Ascending aorta (tissue), 2 donors: ENCODE measurements at regions of chr9 and their contacts with region 1.

Region 1: GRCh38 chr9:127897218-127898211 is 1.9 kb downstream of the ST6GALNAC6 start:
- DNase-seq: peak in 1 of 2 donors; percentile 92
- H3K4me3 ChIP-seq: peak overlapping the region; percentile 83 to 100
- H3K27ac ChIP-seq: peak overlapping the region; percentile 95 to 99
- H3K4me1 ChIP-seq: peaks cover 14 to 29% of the 10 kb centered on the region in 2 donors
- H3K27me3 ChIP-seq: no peaks in the 10 kb centered on the region
- CTCF ChIP-seq: no peak

Region 2: GRCh38 chr9:127877566-127877998 is 19.9 kb before region 1 on chr9 and contains the start of gene AK1:
- intact Hi-C with region 1: loop called (anchors 2 kb)
- DNase-seq: peak in 1 of 2 donors; percentile 89
- H3K4me3 ChIP-seq: peak within 1 kb of the TSS; percentile 65 to 67
- H3K27ac ChIP-seq: peak within 1 kb of the TSS; percentile 76 to 80
- H3K4me1 ChIP-seq: peaks cover 24 to 44% of the 10 kb centered on the region in 2 donors
- H3K27me3 ChIP-seq: no peaks in the 10 kb centered on the region
- CTCF ChIP-seq: no peak
- total RNA-seq, gene AK1: 64.5 TPM